HEK293T (cell line): ENCODE measurements at regions of chr10 and their contacts with region 1.

Region 1: GRCh38 chr10:80408242-80409101 is at the start of gene PRXL2A:
- DNase-seq: peak; percentile 81

Region 2: DNA sequence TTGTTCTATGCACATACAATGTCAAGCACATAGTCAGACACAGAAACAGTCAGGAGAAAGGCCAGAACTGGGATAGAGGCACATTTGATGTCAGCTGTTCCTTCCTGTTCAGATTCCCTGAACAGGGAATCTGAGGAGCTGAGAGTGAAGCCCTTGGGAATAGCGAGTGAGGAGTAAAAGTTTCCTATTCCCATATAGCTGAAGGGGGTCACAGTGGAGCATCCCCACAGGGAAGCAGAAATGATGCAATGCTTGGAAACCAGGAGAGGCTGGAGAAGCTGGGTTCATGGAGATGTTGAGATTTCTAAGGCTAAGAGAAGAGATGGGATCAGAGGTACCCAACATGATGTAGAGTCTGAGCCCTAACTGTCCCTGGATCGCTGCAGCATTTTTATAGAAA is 11.5 kb before region 1 on chr10:
- CTCF ChIA-PET with region 1: no interaction called
- POLR2A ChIA-PET with region 1: interaction called, 10 read pairs
- DNase-seq: no peak

Region 3: GRCh38 chr10:80421707-80422536 is 13.4 kb after region 1 on chr10:
- CTCF ChIA-PET with region 1: no interaction called
- POLR2A ChIA-PET with region 1: interaction called, 11 read pairs
- DNase-seq: no peak

Region 4: DNA sequence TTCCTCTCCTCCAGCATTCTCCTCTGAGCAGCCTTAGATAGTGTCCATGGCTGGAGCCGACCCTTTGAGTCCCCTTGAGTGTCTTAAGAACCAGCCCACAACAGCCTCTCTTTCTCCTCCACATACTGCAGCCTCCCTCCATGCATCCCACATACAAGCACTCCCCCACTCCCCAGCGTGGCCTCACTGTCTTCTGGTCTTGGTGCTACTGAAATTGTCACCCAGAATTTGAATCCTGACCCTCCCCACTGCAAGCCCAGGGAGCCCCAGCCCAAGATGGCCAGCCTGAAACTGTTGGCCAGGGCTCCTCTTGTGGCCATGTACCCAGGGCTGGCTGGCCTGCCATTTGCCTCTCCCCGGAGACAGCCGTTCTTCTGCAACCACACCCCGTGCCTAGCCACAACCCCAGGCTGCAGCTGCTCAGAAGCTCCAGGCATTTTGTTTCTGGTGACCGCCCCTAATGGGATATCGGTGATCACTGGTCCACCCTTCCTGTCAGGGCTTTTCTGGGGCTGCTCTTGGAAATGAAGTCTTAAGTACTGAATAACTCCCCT is 110.4 kb after region 1 on chr10:
- CTCF ChIA-PET with region 1: no interaction called
- POLR2A ChIA-PET with region 1: no interaction called
- DNase-seq: no peak